Ascending aorta (tissue), 2 donors: ENCODE measurements at regions of chr15 and their contacts with region 1.

Region 1: GRCh38 chr15:62742409-62743171 is 300.0 kb upstream of the TPM1 start:
- DNase-seq: peak in 1 of 2 donors; percentile 88
- H3K4me3 ChIP-seq: no peak overlapping the region
- H3K27ac ChIP-seq: peak overlapping the region; percentile 60 to 72
- H3K4me1 ChIP-seq: peaks cover 3 to 11% of the 10 kb centered on the region in 2 donors
- H3K27me3 ChIP-seq: no peaks in the 10 kb centered on the region
- CTCF ChIP-seq: peak; percentile 50 to 84 (median 79)

Region 2: DNA sequence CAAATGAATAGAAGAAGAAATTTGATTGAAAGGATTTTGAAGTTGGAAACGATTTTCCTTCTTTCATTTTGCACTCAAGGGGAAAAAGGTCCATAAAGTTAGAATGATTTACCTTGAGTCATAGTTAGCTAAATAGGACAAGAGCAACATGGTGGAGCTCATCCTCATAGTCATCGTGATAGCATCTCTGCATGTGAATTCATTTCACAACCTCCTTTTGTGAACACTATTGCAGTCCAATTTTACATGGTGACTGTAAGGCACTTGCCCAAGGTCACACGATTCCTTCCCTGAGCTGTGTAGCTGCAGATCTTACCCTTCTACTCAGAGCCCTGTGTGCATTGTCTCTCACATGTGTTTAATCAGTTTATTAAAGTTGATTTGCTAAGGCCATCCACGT is 217.7 kb before region 1 on chr15:
- intact Hi-C with region 1: no loop called
- DNase-seq: no peak
- H3K4me3 ChIP-seq: no peak overlapping the region
- H3K27ac ChIP-seq: no peak overlapping the region
- H3K4me1 ChIP-seq: peaks cover 0 to 5% of the 10 kb centered on the region in 2 donors
- H3K27me3 ChIP-seq: no peaks in the 10 kb centered on the region
- CTCF ChIP-seq: no peak

Region 3: GRCh38 chr15:62719316-62719715 is 23.3 kb before region 1 on chr15:
- intact Hi-C with region 1: no loop called
- DNase-seq: no peak
- H3K4me3 ChIP-seq: no peak overlapping the region
- H3K27ac ChIP-seq: no peak overlapping the region
- H3K4me1 ChIP-seq: no peaks in the 10 kb centered on the region
- H3K27me3 ChIP-seq: no peaks in the 10 kb centered on the region
- CTCF ChIP-seq: no peak

Region 4: GRCh38 chr15:62758126-62758951 is 15.7 kb after region 1 on chr15:
- intact Hi-C with region 1: loop called (anchors 2 kb)
- DNase-seq: peak in 1 of 2 donors; percentile 83
- H3K4me3 ChIP-seq: peak overlapping the region in 1 of 2 donors; percentile 29
- H3K27ac ChIP-seq: peak overlapping the region; percentile 74 to 78
- H3K4me1 ChIP-seq: peaks cover 8 to 23% of the 10 kb centered on the region in 2 donors
- H3K27me3 ChIP-seq: no peaks in the 10 kb centered on the region
- CTCF ChIP-seq: no peak